Activated naive CD4-positive, alpha-beta T cell treated with anti-CD3 and anti-CD28 coated beads for 36 hours (primary cell): ENCODE measurements at regions of chr7 and their contacts with region 1.

Region 1: GRCh38 chr7:100081535-100082102 is at the start of gene ZNF3:
- DNase-seq: peak; percentile 99
- H3K4me3 Mint-ChIP-seq: peak within 1 kb of the TSS; percentile 88
- H3K27ac Mint-ChIP-seq: peak within 1 kb of the TSS; percentile 86
- H3K4me1 Mint-ChIP-seq: peaks cover 29% of the 10 kb centered on the region
- H3K27me3 Mint-ChIP-seq: no peaks in the 10 kb centered on the region
- total RNA-seq, gene ZNF3: 13.1 to 14.0 TPM

Region 2: GRCh38 chr7:99422186-99422585 is 659.4 kb before region 1 on chr7:
- CTCF ChIA-PET with region 1: no interaction called
- intact Hi-C with region 1: no loop called
- DNase-seq: no peak
- H3K4me3 Mint-ChIP-seq: no peak overlapping the region
- H3K27ac Mint-ChIP-seq: no peak overlapping the region
- H3K4me1 Mint-ChIP-seq: peaks cover 2% of the 10 kb centered on the region
- H3K27me3 Mint-ChIP-seq: no peaks in the 10 kb centered on the region

Region 3: DNA sequence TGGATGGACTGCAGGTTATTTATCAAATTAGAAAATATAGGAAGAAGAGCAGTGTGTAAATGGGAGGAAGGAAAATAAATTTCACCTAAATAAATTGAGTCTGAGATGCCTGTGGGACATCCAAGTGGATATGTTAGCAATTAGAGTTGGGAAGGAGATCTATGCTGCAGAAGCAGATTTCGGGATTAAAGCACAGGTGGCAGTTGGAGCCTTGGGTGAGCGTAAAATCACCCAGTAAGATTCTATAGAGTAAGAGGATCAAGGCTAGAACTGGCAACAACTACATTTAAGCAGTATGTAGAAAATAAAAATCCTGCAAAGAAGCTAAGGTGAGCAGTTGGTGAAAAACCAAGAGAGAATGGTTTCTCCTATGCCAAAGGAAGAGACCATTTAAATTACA is 170.6 kb before region 1 on chr7:
- CTCF ChIA-PET with region 1: interaction called, 9 read pairs
- intact Hi-C with region 1: loop called (anchors 1 kb)
- DNase-seq: no peak
- H3K4me3 Mint-ChIP-seq: no peak overlapping the region
- H3K27ac Mint-ChIP-seq: no peak overlapping the region
- H3K4me1 Mint-ChIP-seq: peaks cover 41% of the 10 kb centered on the region
- H3K27me3 Mint-ChIP-seq: no peaks in the 10 kb centered on the region

Region 4: DNA sequence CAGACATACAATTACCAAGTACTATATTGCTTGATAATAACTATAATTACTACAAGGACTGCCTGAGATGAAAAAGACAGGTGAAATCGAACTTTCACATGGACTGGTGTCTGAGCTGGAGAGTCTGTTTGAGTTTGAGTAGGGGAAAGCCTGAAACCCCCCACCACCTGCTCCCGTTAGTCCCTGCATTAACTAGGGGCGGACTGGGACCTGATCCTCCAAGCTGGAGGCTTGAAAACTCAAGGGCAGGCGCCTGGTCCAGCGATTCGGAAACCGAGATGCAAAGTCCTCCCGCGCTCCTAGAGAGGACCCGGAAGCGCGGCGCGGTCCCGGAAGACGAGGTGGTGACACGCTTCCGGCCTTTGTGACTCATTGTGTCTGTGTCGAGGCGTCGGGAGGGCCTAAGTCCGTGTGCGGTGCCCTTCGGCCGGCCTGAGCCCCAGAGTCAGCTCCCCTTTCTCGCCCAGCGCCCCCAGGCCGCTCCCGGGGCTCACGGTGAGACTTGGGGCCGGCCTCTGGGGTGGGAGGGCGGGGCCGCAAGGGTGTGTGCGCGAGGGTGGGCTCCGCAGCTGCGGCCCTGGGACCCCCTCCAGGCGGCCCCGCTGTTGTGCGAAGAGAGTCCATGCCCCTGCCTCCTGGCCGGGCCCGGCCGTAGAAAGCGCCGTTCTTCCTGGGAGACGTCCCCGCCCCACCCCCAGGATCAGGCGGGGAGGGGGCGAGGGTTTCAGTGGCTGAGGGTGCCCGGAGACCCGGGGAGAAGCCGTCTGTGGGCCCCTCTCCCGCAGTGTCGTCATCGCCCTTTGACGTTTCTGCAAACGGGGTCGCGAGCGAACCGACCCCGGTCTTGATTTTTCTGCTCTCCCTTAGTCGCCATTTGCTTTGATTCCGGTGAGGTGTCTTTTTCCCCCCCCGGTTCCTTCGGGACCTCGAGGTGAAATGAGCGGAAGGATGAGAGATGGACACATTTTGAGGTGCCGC is 66.1 kb before region 1 on chr7 and contains the start of gene ZKSCAN1:
- CTCF ChIA-PET with region 1: interaction called, 3 read pairs
- intact Hi-C with region 1: loop called (anchors 1 kb)
- DNase-seq: peak; percentile 89
- H3K4me3 Mint-ChIP-seq: peak within 1 kb of the TSS; percentile 88
- H3K27ac Mint-ChIP-seq: peak within 1 kb of the TSS; percentile 91
- H3K4me1 Mint-ChIP-seq: peaks cover 64% of the 10 kb centered on the region
- H3K27me3 Mint-ChIP-seq: no peaks in the 10 kb centered on the region
- total RNA-seq, gene ZKSCAN1: 64.4 to 67.9 TPM

Region 5: GRCh38 chr7:100101016-100101862 is 19.6 kb after region 1 on chr7 and contains the starts of genes AP4M1 and MCM7:
- CTCF ChIA-PET with region 1: interaction called, 6 read pairs
- intact Hi-C with region 1: loop called (anchors 1 kb)
- DNase-seq: peak; percentile 98
- H3K4me3 Mint-ChIP-seq: peak within 1 kb of the TSS; percentile 91
- H3K27ac Mint-ChIP-seq: peak within 1 kb of the TSS; percentile 96
- H3K4me1 Mint-ChIP-seq: peaks cover 40% of the 10 kb centered on the region
- H3K27me3 Mint-ChIP-seq: no peaks in the 10 kb centered on the region
- total RNA-seq, gene AP4M1: 12.6 to 12.7 TPM
- total RNA-seq, gene MCM7: 390 to 395 TPM